GM12878 (cell line): ENCODE measurements at regions of chrX and their contacts with region 1.

Region 1: DNA sequence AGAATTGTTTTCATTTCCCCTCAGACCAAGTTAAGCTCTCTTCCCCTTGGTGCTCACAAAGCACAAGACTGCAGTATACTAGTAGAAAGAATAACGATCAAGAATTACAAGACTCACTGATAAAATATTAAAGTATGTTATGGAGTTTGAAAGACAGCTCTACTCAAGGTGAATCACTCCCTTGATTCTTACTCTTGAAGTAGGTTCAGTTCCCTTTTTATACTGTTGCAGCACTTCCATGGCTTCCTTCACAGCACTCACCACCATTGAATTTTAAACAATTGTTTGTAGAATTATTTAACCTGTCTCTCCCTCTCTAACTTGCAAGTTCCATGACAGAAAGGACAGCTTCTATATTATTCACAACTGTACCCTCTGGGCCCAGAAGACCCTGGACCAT is 42.2 kb downstream of the CASK start:
- DNase-seq: no peak
- ATAC-seq: peak; percentile 64
- H3K4me3 ChIP-seq: no peak overlapping the region
- H3K27ac ChIP-seq: no peak overlapping the region
- H3K4me1 ChIP-seq: no peaks in the 10 kb centered on the region
- H3K27me3 ChIP-seq: no peaks in the 10 kb centered on the region
- CTCF ChIP-seq: no peak
- EP300 ChIP-seq: no peak
- POLR2A ChIP-seq: no peak
- RAD21 ChIP-seq: no peak

Region 2: GRCh38 chrX:41808047-41808446 is 73.1 kb before region 1 on chrX:
- CTCF ChIA-PET with region 1: no interaction called
- POLR2A ChIA-PET with region 1: no interaction called
- RAD21 ChIA-PET with region 1: no interaction called
- SMC1A ChIA-PET with region 1: no interaction called
- in situ Hi-C with region 1: no loop called
- intact Hi-C with region 1: no loop called
- DNase-seq: no peak
- ATAC-seq: no peak
- H3K4me3 ChIP-seq: no peak overlapping the region
- H3K27ac ChIP-seq: no peak overlapping the region
- H3K4me1 ChIP-seq: no peaks in the 10 kb centered on the region
- H3K27me3 ChIP-seq: no peaks in the 10 kb centered on the region
- CTCF ChIP-seq: no peak
- EP300 ChIP-seq: no peak
- POLR2A ChIP-seq: no peak
- RAD21 ChIP-seq: no peak

Region 3: GRCh38 chrX:41868392-41868977 is 12.7 kb before region 1 on chrX:
- CTCF ChIA-PET with region 1: interaction called, 4 read pairs
- POLR2A ChIA-PET with region 1: interaction called, 6 read pairs
- RAD21 ChIA-PET with region 1: interaction called, 6 read pairs
- SMC1A ChIA-PET with region 1: interaction called, 15 read pairs
- in situ Hi-C with region 1: no loop called
- intact Hi-C with region 1: no loop called
- DNase-seq: no peak
- ATAC-seq: peak; percentile 66
- H3K4me3 ChIP-seq: no peak overlapping the region
- H3K27ac ChIP-seq: no peak overlapping the region
- H3K4me1 ChIP-seq: peaks cover 3% of the 10 kb centered on the region; the same call in 1 of the 2 replicates
- H3K27me3 ChIP-seq: no peaks in the 10 kb centered on the region
- CTCF ChIP-seq: no peak
- EP300 ChIP-seq: no peak
- POLR2A ChIP-seq: no peak
- RAD21 ChIP-seq: no peak